Heart left ventricle (tissue), 16 donors: ENCODE measurements at regions of chr1 and their contacts with region 1.

Region 1: GRCh38 chr1:92817986-92818764 is 13.7 kb upstream of the RPL5 start:
- DNase-seq: no peak
- ATAC-seq: peak in 2 of 4 donors; percentile 47 to 48
- H3K4me3 ChIP-seq: no peak overlapping the region
- H3K27ac ChIP-seq: no peak overlapping the region
- H3K4me1 ChIP-seq: no peaks in the 10 kb centered on the region
- H3K27me3 ChIP-seq: no peaks in the 10 kb centered on the region
- CTCF ChIP-seq: peak; percentile 57 to 83 (median 66)
- POLR2A ChIP-seq: no peak

Region 2: GRCh38 chr1:92298573-92299476 is 519.4 kb before region 1 on chr1 and contains the starts of genes GLMN and RPAP2:
- intact Hi-C with region 1: loop called in 1 of 10 experiments (anchors 10 kb)
- DNase-seq: peak; percentile 79 to 91 (median 85)
- ATAC-seq: peak; percentile 98 to 100 (median 100)
- H3K4me3 ChIP-seq: peak within 1 kb of the TSS; percentile 59 to 97 (median 86)
- H3K27ac ChIP-seq: peak within 1 kb of the TSS; percentile 85 to 95 (median 92)
- H3K4me1 ChIP-seq: peaks cover 0 to 23% (median 13%) of the 10 kb centered on the region in 12 donors
- H3K27me3 ChIP-seq: no peaks in the 10 kb centered on the region
- CTCF ChIP-seq: peak in 5 of 12 donors; percentile 5 to 36 (median 12)
- POLR2A ChIP-seq: peak; percentile 76 to 92
- total RNA-seq, gene GLMN: 3.0 to 7.2 (median 5.6) TPM
- total RNA-seq, gene RPAP2: 6.7 to 27.7 (median 23.3) TPM

Region 3: DNA sequence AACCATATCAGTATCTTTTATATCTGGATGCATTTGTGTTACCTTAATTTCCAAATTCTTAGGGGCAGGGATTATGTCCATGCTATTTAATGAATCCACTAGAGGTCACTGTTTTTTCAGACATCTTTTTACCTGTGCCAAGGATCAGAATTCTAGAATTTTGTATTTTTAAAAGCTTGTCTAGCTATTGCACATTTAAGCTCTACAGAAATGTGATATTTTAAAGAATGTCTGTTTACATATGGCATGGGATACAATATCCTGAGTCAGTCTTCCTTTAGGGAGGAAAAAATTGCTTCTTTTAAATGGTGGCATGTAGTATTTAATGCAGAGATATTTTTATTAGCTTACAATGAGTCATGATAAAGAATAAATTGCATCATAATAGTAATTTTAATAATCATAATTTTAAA is 508.0 kb before region 1 on chr1:
- intact Hi-C with region 1: loop called in 2 of 10 experiments (anchors 10 kb)
- DNase-seq: no peak
- ATAC-seq: peak in 1 of 4 donors; percentile 49
- H3K4me3 ChIP-seq: no peak overlapping the region
- H3K27ac ChIP-seq: no peak overlapping the region
- H3K4me1 ChIP-seq: no peaks in the 10 kb centered on the region
- H3K27me3 ChIP-seq: no peaks in the 10 kb centered on the region
- CTCF ChIP-seq: peak; percentile 37 to 73 (median 54)
- POLR2A ChIP-seq: no peak

Region 4: DNA sequence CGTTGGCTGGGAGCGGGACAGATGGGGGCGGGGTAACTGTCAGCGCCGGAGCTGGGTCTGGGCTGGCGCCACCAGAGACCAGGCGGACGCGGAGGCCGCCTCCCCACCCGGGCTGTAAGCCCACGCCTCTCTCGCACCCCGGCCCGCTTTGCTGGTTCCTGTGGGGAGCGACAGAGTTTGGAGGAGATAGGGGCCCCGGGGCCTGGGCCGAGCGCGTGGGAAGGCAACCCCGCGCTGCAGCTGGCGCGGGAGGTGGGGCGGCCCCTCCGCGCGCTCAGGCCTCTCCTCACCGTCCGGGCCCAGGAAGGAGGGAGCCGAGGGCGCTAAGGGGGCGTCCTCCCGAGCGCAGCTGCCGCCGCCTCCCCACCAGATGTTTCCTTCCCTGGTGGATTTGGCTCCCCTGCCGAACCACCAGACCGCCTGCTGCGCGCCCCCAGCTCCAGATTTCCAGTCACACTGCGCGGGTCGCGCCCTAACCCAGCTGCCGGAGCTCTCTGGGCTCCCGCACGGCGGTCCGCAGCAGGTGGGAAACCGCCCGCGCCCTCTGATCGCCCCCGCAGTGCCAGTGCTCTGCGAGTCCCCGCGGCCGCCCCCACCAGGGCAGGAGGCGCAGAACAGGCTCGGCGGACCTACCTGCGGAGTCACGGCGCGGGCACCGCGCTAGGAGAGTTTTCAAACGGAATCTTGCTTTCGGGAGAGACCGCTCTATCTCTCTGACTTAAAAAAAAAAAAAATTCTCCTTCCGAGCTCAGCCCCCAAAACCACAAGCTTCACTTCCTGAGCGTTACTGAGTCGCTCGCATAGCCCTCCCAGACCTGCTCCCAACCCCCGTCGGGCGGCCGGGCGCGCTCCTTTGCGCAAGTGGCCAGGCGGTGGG is 332.6 kb before region 1 on chr1:
- intact Hi-C with region 1: loop called in 1 of 10 experiments (anchors 10 kb)
- DNase-seq: peak in 4 of 5 donors; percentile 29 to 74 (median 40)
- ATAC-seq: peak in 3 of 4 donors; percentile 12 to 56 (median 46)
- H3K4me3 ChIP-seq: peak overlapping the region; percentile 37 to 81 (median 54)
- H3K27ac ChIP-seq: peak overlapping the region in 1 of 12 donors; percentile 80
- H3K4me1 ChIP-seq: peaks cover 15 to 64% (median 54%) of the 10 kb centered on the region in 12 donors
- H3K27me3 ChIP-seq: peaks cover 48 to 85% (median 62%) of the 10 kb centered on the region in 9 donors
- CTCF ChIP-seq: peak in 3 of 12 donors; percentile 15 to 29 (median 26)
- POLR2A ChIP-seq: no peak

Region 5: GRCh38 chr1:92691925-92692324 is 126.2 kb before region 1 on chr1:
- intact Hi-C with region 1: no loop called
- DNase-seq: no peak
- ATAC-seq: no peak
- H3K4me3 ChIP-seq: no peak overlapping the region
- H3K27ac ChIP-seq: no peak overlapping the region
- H3K4me1 ChIP-seq: peaks cover 0 to 8% (median 0%) of the 10 kb centered on the region in 12 donors
- H3K27me3 ChIP-seq: no peaks in the 10 kb centered on the region
- CTCF ChIP-seq: no peak
- POLR2A ChIP-seq: no peak

Region 6: DNA sequence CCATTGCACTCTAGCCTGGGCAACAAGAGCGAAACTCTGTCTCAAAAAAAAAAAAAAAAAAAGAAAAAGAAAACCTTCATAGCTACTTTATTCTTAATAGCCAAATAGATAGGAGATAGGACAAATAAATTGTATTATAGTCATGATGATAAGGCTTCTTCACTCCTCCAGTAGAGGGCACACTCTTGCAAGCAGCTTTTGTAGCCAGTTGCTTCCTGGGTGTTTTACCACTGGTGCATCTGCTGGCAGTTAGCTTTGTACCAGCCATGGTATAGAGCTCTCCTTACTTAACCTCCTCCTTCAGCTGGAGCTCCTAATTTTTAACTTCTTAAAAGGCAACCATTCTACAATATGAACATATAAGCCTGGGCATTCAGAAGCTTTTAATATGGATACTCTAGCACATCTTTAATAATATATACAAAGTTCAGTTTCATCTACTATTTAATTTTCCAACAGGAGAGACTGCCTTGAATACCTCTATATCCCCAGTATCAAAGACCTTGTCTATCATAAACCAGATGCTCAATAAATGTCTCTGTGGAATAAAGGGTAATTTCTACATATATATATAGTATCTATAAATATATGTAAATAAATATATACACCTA is 69.0 kb before region 1 on chr1:
- intact Hi-C with region 1: loop called in 8 of 10 experiments (anchors 1 to 10 kb)
- DNase-seq: peak in 1 of 5 donors; percentile 16
- ATAC-seq: peak in 3 of 4 donors; percentile 54 to 59 (median 55)
- H3K4me3 ChIP-seq: no peak overlapping the region
- H3K27ac ChIP-seq: no peak overlapping the region
- H3K4me1 ChIP-seq: peaks cover 0 to 25% (median 7%) of the 10 kb centered on the region in 12 donors
- H3K27me3 ChIP-seq: no peaks in the 10 kb centered on the region
- CTCF ChIP-seq: peak; percentile 34 to 72 (median 54)
- POLR2A ChIP-seq: no peak

Region 7: DNA sequence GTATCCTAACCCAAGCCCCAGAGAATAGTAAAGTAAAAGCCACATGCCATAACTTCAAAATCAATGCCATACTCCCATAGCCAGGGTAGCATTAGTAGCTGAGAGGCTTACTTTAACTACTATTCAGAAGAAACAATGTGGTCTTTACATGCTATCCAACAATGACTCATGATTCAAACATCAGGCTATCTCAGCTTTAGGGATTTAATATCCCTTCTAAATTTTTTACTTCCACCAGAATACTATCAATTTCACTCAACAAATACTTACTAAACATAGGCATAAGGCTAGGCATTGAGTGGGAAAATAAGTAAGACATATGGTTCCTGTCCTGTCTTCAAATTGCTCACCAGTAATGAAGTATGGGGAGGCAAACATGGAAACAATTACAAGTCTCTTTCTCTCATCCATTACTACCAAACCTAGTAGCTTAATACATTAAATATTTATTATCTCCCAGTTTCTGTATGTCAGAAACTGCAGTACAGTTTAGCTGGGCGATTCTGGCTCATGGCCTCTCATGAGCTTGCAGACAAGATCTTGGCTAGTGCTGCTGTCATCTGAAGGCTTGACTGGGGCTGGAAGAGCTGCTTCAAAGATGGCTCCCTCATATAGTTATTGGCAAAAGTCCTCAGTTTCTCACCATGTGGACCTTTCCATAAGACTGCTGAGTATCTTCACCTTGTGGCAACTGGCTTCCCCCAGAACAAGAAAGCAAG is 64.0 kb before region 1 on chr1:
- intact Hi-C with region 1: loop called in 8 of 10 experiments (anchors 1 to 10 kb)
- DNase-seq: no peak
- ATAC-seq: no peak
- H3K4me3 ChIP-seq: no peak overlapping the region
- H3K27ac ChIP-seq: peak overlapping the region in 2 of 12 donors; percentile 18 to 80
- H3K4me1 ChIP-seq: peaks cover 0 to 32% (median 16%) of the 10 kb centered on the region in 12 donors
- H3K27me3 ChIP-seq: no peaks in the 10 kb centered on the region
- CTCF ChIP-seq: no peak
- POLR2A ChIP-seq: no peak